ENCODE measurements at regions of chr16 and their contacts with region 1.

Region 1: DNA sequence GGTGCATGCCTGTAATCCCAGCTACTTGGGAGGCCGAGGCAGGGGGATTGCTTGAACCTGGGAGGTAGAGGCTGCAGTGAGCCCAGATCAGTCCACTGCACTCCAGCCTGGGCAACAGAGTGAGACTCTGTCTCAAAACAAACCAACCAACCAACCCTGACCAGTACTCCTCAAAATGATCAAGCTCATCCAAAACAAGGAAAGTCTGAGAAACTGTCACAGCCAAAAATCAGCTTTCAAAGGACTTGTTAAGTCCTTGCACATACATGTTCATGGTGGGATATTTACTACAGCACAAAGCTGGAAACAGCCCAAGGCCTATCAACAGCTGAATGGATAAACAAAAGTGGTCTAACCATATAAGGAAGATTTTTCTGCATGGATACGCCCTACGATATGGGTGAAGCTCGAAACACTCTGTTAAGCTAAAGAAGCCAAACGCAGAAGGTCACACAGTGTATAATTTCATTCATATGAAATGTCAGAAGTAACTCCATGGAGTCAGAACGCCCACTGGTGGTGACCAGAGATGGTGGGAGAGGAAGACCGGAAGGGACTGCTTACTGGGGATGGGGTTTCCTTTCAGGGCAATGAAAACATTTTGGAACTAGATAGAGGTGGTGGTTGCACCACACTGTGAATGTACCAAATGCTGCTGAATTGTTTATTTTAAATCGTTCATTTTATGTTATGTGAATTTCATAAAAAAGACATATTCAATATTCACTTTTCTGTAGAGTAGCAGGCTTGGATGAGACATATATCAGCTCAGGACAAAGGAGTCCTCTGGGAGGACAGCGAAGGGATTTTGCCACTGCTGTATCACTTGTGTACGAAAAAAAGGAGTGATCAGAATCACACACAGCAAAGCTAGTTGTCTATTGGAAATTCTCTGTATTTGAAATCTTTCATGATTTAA is 17.7 kb downstream of the CCL17 start:
- DNase-seq: no peak
- ATAC-seq: no peak
- H3K4me3 ChIP-seq: no peak overlapping the region
- H3K4me3 Mint-ChIP-seq: no peak overlapping the region
- H3K27ac ChIP-seq: no peak overlapping the region
- H3K27ac Mint-ChIP-seq: no peak overlapping the region
- H3K4me1 ChIP-seq: peaks cover 10 to 13% of the 10 kb centered on the region in 2 donors
- H3K4me1 Mint-ChIP-seq: peaks cover 17% of the 10 kb centered on the region
- H3K27me3 ChIP-seq: no peaks in the 10 kb centered on the region
- H3K27me3 Mint-ChIP-seq: no peaks in the 10 kb centered on the region
- CTCF ChIP-seq: no peak

Region 2: GRCh38 chr16:57403965-57404817 is 18.1 kb before region 1 on chr16 and contains the start of gene CCL17:
- CTCF ChIA-PET with region 1: interaction called, 31 read pairs
- POLR2A ChIA-PET with region 1: no interaction called
- intact Hi-C with region 1: no loop called
- DNase-seq: no peak
- ATAC-seq: no peak
- H3K4me3 ChIP-seq: no peak within 1 kb of the TSS
- H3K4me3 Mint-ChIP-seq: no peak within 1 kb of the TSS
- H3K27ac ChIP-seq: no peak within 1 kb of the TSS
- H3K27ac Mint-ChIP-seq: no peak within 1 kb of the TSS
- H3K4me1 ChIP-seq: peaks cover 23 to 24% of the 10 kb centered on the region in 2 donors
- H3K4me1 Mint-ChIP-seq: peaks cover 31% of the 10 kb centered on the region
- H3K27me3 ChIP-seq: no peaks in the 10 kb centered on the region
- H3K27me3 Mint-ChIP-seq: no peaks in the 10 kb centered on the region
- CTCF ChIP-seq: no peak
- total RNA-seq, gene CCL17: not detected in 2 replicates

Region 3: DNA sequence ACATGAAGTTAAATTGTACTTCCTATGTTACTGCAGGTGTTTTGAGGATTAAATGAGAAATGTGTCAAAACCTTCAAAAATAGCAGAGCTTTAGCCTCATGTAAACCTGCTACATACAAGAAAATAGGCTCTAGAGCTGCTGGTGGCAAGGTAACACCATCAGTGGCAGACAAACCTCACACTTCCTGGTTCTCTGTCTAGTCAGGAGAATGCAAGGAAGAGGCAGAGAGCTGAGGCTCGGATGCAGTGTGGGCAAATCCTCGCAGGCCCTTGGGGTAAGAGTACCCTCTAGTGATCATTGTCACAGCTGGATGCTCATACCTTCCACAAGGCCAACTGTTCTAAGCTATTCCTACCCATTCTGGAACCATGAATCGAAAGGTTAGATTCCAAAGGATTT is 10.7 kb after region 1 on chr16:
- CTCF ChIA-PET with region 1: interaction called, 10 read pairs
- POLR2A ChIA-PET with region 1: no interaction called
- intact Hi-C with region 1: no loop called
- DNase-seq: no peak
- ATAC-seq: no peak
- H3K4me3 ChIP-seq: no peak overlapping the region
- H3K4me3 Mint-ChIP-seq: no peak overlapping the region
- H3K27ac ChIP-seq: no peak overlapping the region
- H3K27ac Mint-ChIP-seq: no peak overlapping the region
- H3K4me1 ChIP-seq: no peaks in the 10 kb centered on the region
- H3K4me1 Mint-ChIP-seq: no peaks in the 10 kb centered on the region
- H3K27me3 ChIP-seq: no peaks in the 10 kb centered on the region
- H3K27me3 Mint-ChIP-seq: no peaks in the 10 kb centered on the region
- CTCF ChIP-seq: no peak